Activated B cell treated with CpG ODN at 0.5 μM for 24 hours (primary cell): ENCODE measurements at regions of chr16 and their contacts with region 1.

Region 1: GRCh38 chr16:89873972-89874689 is 739 bp downstream of the TCF25 start:
- DNase-seq: peak; percentile 98
- ATAC-seq: peak; percentile 84
- H3K4me3 Mint-ChIP-seq: peak overlapping the region; percentile 93
- H3K27ac Mint-ChIP-seq: peak overlapping the region; percentile 97
- H3K4me1 Mint-ChIP-seq: peaks cover 17% of the 10 kb centered on the region
- H3K27me3 Mint-ChIP-seq: no peaks in the 10 kb centered on the region
- CTCF ChIP-seq: no peak

Region 2: DNA sequence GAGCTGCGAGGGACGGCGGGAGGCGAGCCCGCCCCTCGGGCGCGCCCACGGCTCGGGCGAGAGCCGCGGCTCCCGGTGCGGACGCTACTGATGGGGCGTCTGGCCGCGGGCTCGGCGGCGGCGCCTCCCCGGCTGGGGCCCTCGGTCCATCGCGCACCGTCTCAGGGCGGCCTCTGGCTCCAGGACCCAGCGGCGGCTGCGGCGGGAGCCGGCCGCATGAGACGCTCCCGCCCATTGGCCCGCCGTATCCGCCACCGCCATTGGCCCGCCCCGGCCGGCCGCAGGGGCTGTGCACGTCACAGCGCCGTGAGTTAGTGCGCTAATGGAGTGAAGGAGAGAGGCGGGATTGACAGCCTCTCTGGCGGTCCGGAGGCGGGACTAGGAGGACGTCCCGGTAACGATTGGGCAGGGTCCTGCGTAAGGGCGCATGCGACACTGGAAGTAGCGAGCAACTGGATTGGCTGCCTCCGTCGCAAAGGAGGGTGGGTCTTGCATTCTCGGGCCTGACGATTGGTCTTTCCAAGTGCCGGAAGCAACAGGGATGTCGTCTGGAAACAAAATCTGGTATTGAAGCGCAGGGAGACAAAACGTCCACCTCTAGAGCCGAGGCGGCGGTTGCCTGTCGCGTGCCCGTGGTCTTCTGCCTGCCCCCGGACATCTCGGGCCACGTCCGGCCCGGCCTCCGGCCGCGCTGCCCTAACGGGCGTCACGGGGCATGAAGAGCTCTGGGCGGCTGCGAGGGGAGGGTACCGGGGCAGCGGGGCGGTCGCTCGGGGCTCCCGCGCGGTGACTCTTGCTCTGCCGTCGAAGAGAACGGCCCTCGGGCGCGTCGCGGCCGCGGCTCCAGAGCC is 383.5 kb before region 1 on chr16 and contains the start of gene ANKRD11:
- CTCF ChIA-PET with region 1: no interaction called
- POLR2A ChIA-PET with region 1: interaction called, 4 read pairs
- intact Hi-C with region 1: loop called (anchors 2 kb)
- DNase-seq: peak; percentile 99
- ATAC-seq: peak; percentile 80
- H3K4me3 Mint-ChIP-seq: peak within 1 kb of the TSS; percentile 91
- H3K27ac Mint-ChIP-seq: peak within 1 kb of the TSS; percentile 97
- H3K4me1 Mint-ChIP-seq: peaks cover 58% of the 10 kb centered on the region
- H3K27me3 Mint-ChIP-seq: no peaks in the 10 kb centered on the region
- CTCF ChIP-seq: no peak
- total RNA-seq, gene ANKRD11: 216 and 243 TPM in 2 replicates

Region 3: DNA sequence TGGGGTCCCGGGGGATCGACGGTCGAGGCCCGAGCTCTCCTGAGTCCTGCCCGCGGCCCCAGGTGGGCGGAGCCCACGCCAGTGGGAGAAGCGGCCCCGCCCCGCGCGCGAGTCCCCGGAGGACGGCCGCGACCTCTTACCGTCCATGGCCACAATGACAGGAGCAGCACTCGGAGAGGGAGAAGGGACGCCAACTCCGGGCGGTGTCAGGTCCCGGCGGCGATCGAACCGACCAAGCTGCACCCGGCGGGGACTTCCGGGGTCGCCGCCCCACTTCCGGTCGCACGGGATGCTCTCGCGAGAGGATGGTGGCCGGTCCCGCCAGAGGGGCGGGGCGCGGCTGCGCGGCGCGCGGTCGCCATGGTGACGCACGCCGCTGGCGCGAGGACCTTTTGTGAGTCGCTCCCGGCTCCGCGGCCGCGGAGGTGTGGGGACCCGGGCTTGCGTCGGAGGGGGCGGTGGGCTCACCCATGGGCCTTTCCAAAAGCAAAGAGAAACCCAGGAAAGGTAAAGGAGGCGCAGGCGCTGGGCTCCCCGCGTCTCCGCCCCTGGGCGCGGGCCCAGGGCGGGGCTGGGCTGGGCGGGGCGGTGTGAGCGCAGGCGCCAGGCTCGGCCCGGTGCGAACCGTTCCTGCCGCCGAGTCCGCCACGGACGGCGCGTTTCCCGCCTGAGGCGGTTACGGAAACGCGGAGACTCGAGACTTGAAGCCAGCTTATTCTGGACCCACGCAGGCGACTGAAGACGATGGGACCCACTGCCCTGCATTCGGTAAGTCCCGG is 216.5 kb before region 1 on chr16 and contains the starts of genes CHMP1A and SPATA33:
- CTCF ChIA-PET with region 1: no interaction called
- POLR2A ChIA-PET with region 1: interaction called, 9 read pairs
- intact Hi-C with region 1: loop called (anchors 1 kb)
- DNase-seq: peak; percentile 96
- ATAC-seq: peak; percentile 91
- H3K4me3 Mint-ChIP-seq: peak within 1 kb of the TSS; percentile 85
- H3K27ac Mint-ChIP-seq: peak within 1 kb of the TSS; percentile 75
- H3K4me1 Mint-ChIP-seq: peaks cover 33% of the 10 kb centered on the region
- H3K27me3 Mint-ChIP-seq: no peaks in the 10 kb centered on the region
- CTCF ChIP-seq: no peak
- total RNA-seq, gene CHMP1A: 89.8 and 98.7 TPM in 2 replicates
- total RNA-seq, gene SPATA33: 8.5 TPM in 2 replicates

Region 4: GRCh38 chr16:89720813-89721545 is 153.2 kb before region 1 on chr16 and contains the starts of genes VPS9D1 and ZNF276:
- CTCF ChIA-PET with region 1: no interaction called
- POLR2A ChIA-PET with region 1: interaction called, 10 read pairs
- intact Hi-C with region 1: loop called (anchors 1 kb)
- DNase-seq: peak; percentile 81
- ATAC-seq: peak; percentile 74
- H3K4me3 Mint-ChIP-seq: peak within 1 kb of the TSS; percentile 85
- H3K27ac Mint-ChIP-seq: peak within 1 kb of the TSS; percentile 85
- H3K4me1 Mint-ChIP-seq: peaks cover 35% of the 10 kb centered on the region
- H3K27me3 Mint-ChIP-seq: no peaks in the 10 kb centered on the region
- CTCF ChIP-seq: no peak
- total RNA-seq, gene VPS9D1: 6.6 and 7.4 TPM in 2 replicates
- total RNA-seq, gene ZNF276: 43.8 and 52.0 TPM in 2 replicates

Region 5: DNA sequence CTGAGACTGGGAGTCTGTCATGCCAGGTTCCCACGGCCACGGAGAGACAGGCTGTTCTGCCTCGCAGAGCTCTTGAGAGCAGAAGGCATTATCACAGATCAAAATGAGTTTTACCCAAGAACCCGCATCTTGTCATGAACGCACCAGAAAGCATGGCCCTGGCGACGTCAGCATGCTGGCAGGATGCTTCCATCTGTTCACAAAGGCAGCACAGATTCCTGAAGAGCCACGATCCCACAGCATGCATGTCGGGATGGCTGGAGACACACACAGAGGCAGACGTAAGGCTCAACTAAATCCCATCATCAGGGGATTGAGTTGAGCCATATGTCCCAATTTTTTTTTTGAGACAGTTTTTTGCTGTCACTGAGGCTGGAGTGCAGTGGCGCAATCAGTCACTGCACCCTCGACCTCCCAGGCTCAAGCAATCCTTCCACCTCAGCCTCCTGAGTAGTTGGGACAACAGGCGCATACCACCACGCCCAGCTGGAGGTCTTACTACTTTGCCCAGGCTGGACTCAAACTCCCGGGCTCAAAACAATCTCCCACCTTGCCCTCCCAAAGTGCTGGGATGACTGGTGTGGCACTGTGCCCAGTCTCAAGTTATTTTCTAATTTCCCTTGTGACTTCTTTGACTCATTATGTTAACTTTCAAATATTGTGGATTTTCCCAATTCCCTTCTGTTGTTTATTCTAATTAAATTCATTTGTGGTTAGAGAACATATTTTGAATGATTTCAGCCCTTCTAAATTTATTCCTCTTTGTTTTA is 68.8 kb before region 1 on chr16:
- CTCF ChIA-PET with region 1: no interaction called
- POLR2A ChIA-PET with region 1: no interaction called
- intact Hi-C with region 1: no loop called
- DNase-seq: no peak
- ATAC-seq: no peak
- H3K4me3 Mint-ChIP-seq: no peak overlapping the region
- H3K27ac Mint-ChIP-seq: no peak overlapping the region
- H3K4me1 Mint-ChIP-seq: no peaks in the 10 kb centered on the region
- H3K27me3 Mint-ChIP-seq: no peaks in the 10 kb centered on the region
- CTCF ChIP-seq: no peak

Region 6: DNA sequence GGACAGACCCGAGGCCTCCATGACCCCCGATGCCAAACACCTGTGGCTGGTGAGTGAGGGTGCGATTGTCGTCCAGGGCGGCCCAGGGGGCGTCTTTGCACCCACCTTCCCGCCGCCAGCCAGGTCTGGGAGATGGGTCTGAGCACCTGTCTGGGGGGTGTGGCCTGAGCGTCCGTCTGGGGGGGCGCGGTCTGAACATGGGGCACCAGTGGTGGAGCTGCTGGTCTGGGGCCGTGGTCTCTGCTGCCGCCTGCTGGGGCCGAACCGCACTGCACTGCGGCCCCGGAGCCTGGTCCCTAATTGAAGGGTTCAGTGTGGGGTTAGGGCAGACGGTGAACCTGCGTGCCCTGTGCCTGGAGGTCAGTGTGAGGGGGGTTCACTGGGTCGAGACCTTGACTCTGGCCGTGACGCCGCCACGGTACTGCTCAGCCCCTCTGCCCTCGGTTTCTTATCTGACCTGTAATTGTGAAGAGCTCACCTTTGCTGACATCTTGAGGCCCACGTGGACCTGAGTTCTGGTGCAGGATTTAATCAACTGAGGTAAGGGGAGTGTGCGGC is 13.3 kb before region 1 on chr16:
- CTCF ChIA-PET with region 1: interaction called, 5 read pairs
- POLR2A ChIA-PET with region 1: interaction called, 51 read pairs
- intact Hi-C with region 1: loop called (anchors 1 kb)
- DNase-seq: peak; percentile 82
- ATAC-seq: peak; percentile 96
- H3K4me3 Mint-ChIP-seq: no peak overlapping the region
- H3K27ac Mint-ChIP-seq: no peak overlapping the region
- H3K4me1 Mint-ChIP-seq: peaks cover 25% of the 10 kb centered on the region
- H3K27me3 Mint-ChIP-seq: peaks cover 3% of the 10 kb centered on the region
- CTCF ChIP-seq: peak; percentile 49

Region 7: GRCh38 chr16:89972244-89973234 is 98.4 kb after region 1 on chr16:
- CTCF ChIA-PET with region 1: no interaction called
- POLR2A ChIA-PET with region 1: no interaction called
- intact Hi-C with region 1: loop called (anchors 1 kb)
- DNase-seq: peak; percentile 94
- ATAC-seq: peak; percentile 92
- H3K4me3 Mint-ChIP-seq: peak overlapping the region; percentile 99
- H3K27ac Mint-ChIP-seq: peak overlapping the region; percentile 94
- H3K4me1 Mint-ChIP-seq: peaks cover 41% of the 10 kb centered on the region
- H3K27me3 Mint-ChIP-seq: no peaks in the 10 kb centered on the region
- CTCF ChIP-seq: no peak